Ascending aorta (tissue), 2 donors: ENCODE measurements at regions of chr12 and their contacts with region 1.

Region 1: GRCh38 chr12:76952995-76953394 is 74.2 kb upstream of the CSRP2 start:
- DNase-seq: no peak
- H3K4me3 ChIP-seq: no peak overlapping the region
- H3K27ac ChIP-seq: peak overlapping the region in 1 of 2 donors; percentile 28
- H3K4me1 ChIP-seq: peaks cover 0 to 8% of the 10 kb centered on the region in 2 donors
- H3K27me3 ChIP-seq: no peaks in the 10 kb centered on the region
- CTCF ChIP-seq: no peak

Region 2: DNA sequence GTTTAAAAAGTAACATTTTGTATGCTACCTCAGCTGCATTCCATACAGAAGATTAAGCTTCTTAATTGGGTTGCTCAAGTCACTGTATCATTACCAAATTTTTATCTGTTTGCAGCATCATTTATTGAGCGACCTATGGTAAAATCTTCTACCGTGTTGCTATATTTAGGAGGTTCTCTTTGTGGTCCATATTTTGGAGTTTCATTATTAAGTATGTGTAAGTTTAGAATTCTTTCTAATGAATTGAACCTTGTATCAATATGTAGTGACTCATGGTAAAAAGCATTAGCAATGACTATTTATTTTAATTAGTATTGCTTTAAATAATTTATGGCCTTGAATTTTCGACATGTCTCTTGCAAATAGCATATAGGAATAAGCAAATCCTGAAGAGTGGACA is 116.4 kb before region 1 on chr12:
- intact Hi-C with region 1: loop called (anchors 5 kb)
- DNase-seq: no peak
- H3K4me3 ChIP-seq: no peak overlapping the region
- H3K27ac ChIP-seq: no peak overlapping the region
- H3K4me1 ChIP-seq: no peaks in the 10 kb centered on the region
- H3K27me3 ChIP-seq: no peaks in the 10 kb centered on the region
- CTCF ChIP-seq: no peak

Region 3: DNA sequence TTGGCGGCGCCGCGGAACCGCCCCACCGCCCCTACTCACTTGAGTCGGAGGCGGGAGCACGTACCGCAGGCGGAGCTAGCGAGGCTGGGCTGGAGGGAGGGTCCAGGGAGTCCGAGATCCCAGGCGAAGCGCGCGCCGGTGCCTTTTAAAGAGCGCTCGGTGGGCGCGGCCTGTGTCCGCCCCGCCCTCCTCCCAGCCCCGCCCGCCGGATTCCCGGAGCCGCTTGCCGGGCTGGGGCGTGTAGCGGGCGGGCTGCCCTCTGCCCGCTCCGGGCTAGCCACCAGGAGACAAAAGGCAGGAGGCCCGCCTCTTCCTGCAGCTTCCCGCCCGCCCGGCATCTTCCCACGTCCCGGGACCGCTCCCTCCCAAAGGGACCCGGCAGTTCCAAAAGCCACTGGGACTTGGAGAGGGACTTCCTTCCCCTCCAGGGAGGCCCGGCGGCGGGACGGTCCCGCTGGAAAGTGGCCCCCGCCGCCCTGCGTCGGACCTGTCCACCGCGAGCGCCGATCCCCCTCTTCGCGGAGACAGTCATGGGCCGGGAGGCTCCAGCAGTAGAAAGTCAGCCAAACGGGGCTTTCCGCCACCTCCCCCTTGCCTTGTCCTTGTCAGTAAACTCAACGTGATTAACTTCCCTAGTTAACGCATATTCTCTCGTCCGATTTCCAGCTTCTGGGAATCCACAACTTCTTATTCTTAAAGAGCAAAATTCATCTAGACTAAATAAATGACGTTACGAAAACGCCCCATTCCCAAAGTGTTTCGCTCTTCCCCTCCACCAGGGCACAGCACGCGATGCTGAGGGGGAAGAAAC is 73.9 kb before region 1 on chr12 and contains the start of gene CSRP2:
- intact Hi-C with region 1: no loop called
- DNase-seq: peak; percentile 83 to 96
- H3K4me3 ChIP-seq: peak within 1 kb of the TSS; percentile 70 to 76
- H3K27ac ChIP-seq: peak within 1 kb of the TSS; percentile 94 to 98
- H3K4me1 ChIP-seq: peaks cover 0 to 33% of the 10 kb centered on the region in 2 donors
- H3K27me3 ChIP-seq: no peaks in the 10 kb centered on the region
- CTCF ChIP-seq: peak; percentile 18 to 36 (median 30)
- total RNA-seq, gene CSRP2: 59.7 TPM